Naive thymus-derived CD8-positive, alpha-beta T cell (primary cell): ENCODE measurements at regions of chr14 and their contacts with region 1.

Region 1: GRCh38 chr14:64914237-64914971 is at the start of gene CHURC1:
- DNase-seq: peak; percentile 88 to 99 (median 97)
- ATAC-seq: peak; percentile 94 to 95
- H3K4me3 Mint-ChIP-seq: peak within 1 kb of the TSS; percentile 84 to 97 (median 92)
- H3K27ac Mint-ChIP-seq: peak within 1 kb of the TSS; percentile 93 to 99 (median 98)
- H3K4me1 Mint-ChIP-seq: peaks cover 30 to 56% (median 51%) of the 10 kb centered on the region in 4 donors
- H3K27me3 Mint-ChIP-seq: peaks cover 0 to 2% (median 0%) of the 10 kb centered on the region in 5 donors
- polyA plus RNA-seq, gene CHURC1: 122 to 166 (median 148) TPM

Region 2: DNA sequence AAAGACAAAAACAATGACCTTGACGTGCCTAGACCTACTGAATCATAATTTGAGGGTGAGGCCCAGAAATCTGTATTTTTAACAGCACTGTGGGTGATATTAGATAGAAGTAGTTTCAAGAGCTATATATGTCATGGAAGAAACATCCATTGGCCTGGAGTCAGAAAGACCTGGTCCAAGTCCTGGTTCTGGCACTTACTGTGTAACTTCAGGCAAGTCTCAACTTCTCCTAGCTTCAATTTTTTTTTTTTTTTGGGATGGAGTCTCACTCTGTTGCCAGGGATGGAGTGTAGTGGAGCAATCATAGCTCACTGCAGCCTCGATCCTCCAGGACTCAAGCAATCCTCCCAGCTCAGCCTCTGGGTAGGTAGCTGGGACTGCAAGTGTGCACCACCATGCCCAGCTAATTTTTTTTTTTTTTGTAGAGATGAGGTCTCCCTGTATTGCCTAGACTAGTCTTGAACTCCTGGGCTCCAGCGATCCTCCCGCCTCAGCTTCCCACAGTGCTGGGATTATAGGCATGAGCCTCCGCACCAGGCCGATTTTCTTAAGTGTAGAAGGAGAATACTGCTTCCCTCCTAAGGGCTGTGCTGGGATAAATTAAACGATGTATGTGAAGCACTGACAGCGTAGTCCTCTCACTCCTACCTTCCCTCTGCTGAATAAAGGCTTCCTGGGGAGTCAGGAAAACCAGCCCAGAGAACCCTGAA is 42.4 kb after region 1 on chr14:
- POLR2A ChIA-PET with region 1: no interaction called
- DNase-seq: no peak
- ATAC-seq: no peak
- H3K4me3 Mint-ChIP-seq: no peak overlapping the region
- H3K27ac Mint-ChIP-seq: peak overlapping the region in 1 of 10 donors; percentile 27
- H3K4me1 Mint-ChIP-seq: peaks cover 3 to 33% (median 22%) of the 10 kb centered on the region in 4 donors
- H3K27me3 Mint-ChIP-seq: no peaks in the 10 kb centered on the region

Region 3: GRCh38 chr14:64986578-64987571 is 72.5 kb after region 1 on chr14 and contains the start of gene FNTB:
- POLR2A ChIA-PET with region 1: interaction called, 12 read pairs
- DNase-seq: peak; percentile 85 to 99 (median 92)
- ATAC-seq: peak; percentile 92 to 94
- H3K4me3 Mint-ChIP-seq: peak within 1 kb of the TSS; percentile 86 to 99 (median 98)
- H3K27ac Mint-ChIP-seq: peak within 1 kb of the TSS; percentile 91 to 100 (median 98)
- H3K4me1 Mint-ChIP-seq: peaks cover 30 to 59% (median 56%) of the 10 kb centered on the region in 4 donors
- H3K27me3 Mint-ChIP-seq: peaks cover 0 to 6% (median 0%) of the 10 kb centered on the region in 5 donors
- polyA plus RNA-seq, gene FNTB: 2.0 to 7.7 (median 4.2) TPM